Caco-2 (cell line): ENCODE measurements at regions of chr2 and their contacts with region 1.

Region 1: DNA sequence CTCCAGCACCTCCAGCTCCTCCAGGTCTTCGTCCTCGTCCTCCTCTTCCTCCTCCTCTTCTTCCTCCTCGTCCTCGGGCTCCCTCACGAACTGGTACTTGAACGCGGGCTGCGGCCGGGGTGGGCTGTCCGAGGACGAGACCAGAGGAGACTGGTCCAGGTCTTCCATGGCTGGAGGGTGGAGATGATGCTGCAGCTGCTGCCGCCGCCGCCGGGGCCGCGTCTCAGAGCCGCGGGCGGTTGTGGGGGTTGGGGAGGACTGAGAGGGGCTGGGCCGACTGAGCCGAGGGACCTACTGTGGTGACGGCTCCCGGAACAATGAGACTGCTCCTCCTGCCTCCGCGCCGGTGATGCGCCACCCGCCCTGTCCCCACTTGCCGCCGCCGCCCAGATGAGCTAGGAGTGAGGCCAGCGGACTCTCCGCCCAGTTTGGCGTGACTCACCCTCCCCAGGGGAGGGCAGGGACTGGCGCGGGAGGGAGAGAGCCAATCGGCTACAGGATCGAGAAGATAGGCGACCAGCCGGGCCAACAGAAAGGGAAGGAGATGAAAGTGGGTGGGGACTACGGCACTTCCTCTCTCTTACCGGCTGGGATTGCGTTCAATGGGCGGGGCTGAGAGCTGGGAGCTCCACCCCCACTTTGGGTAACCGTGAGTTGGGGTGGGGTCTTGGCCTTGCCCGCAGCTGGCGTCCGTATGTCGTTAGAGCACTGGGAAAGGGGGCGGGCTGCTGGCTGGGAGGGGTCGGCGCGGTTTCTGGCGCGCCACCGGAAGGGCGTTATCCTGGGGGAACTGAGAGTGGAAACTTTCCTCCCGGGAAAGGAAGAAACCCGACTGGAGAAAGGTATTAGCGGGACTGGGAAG is at the start of gene RTN4:
- DNase-seq: peak; percentile 99 to 100
- H3K4me3 ChIP-seq: peak within 1 kb of the TSS; percentile 87
- H3K4me3 Mint-ChIP-seq: peak within 1 kb of the TSS; percentile 88
- H3K27ac Mint-ChIP-seq: peak within 1 kb of the TSS; percentile 89
- H3K4me1 ChIP-seq: peaks cover 42% of the 10 kb centered on the region
- H3K4me1 Mint-ChIP-seq: peaks cover 21% of the 10 kb centered on the region
- H3K27me3 ChIP-seq: no peaks in the 10 kb centered on the region
- H3K27me3 Mint-ChIP-seq: no peaks in the 10 kb centered on the region
- CTCF ChIP-seq: no peak
- total RNA-seq, gene RTN4: 231 and 236 TPM in 2 replicates

Region 2: GRCh38 chr2:54899576-54900200 is 150.7 kb before region 1 on chr2:
- CTCF ChIA-PET with region 1: interaction called, 16 read pairs
- POLR2A ChIA-PET with region 1: no interaction called
- intact Hi-C with region 1: no loop called
- DNase-seq: peak in 1 of 2 experiments; percentile 50
- H3K4me3 ChIP-seq: no peak overlapping the region
- H3K4me3 Mint-ChIP-seq: no peak overlapping the region
- H3K27ac Mint-ChIP-seq: no peak overlapping the region
- H3K4me1 ChIP-seq: peaks cover 47% of the 10 kb centered on the region
- H3K4me1 Mint-ChIP-seq: peaks cover 22% of the 10 kb centered on the region
- H3K27me3 ChIP-seq: no peaks in the 10 kb centered on the region
- H3K27me3 Mint-ChIP-seq: no peaks in the 10 kb centered on the region
- CTCF ChIP-seq: peak; percentile 65 to 69

Region 3: DNA sequence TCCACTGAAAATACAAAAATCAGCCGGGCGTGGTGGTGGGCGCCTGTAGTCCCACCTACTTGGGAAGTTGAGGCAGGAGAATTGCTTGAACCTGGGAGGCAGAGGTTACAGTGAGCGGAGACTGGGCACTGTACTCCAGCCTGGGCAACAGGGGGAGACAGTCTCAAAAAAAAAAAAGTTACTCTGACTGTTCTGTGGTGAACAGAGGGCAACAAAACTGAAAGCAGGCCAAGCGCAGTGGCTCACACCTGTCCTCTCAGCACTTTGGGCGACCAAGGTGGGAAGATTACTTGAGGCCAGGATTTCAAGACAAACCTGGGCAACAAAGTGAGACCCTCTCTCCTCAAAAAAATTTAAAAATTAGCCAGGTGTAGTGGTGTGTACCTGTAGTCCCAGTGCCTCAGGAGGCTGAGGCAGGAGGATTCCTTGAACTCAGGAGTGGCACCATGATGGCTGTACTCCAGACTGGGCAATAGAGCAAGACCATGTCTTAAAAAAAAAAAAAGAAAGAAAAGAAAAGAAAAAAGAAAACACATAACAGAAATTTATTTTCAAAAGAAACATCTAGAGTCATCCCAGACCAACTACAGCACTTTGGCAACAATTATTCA is 13.5 kb after region 1 on chr2:
- CTCF ChIA-PET with region 1: interaction called, 3 read pairs
- POLR2A ChIA-PET with region 1: no interaction called
- intact Hi-C with region 1: loop called (anchors 1 kb)
- DNase-seq: peak in 1 of 2 experiments; percentile 17
- H3K4me3 ChIP-seq: no peak overlapping the region
- H3K4me3 Mint-ChIP-seq: no peak overlapping the region
- H3K27ac Mint-ChIP-seq: no peak overlapping the region
- H3K4me1 ChIP-seq: no peaks in the 10 kb centered on the region
- H3K4me1 Mint-ChIP-seq: no peaks in the 10 kb centered on the region
- H3K27me3 ChIP-seq: no peaks in the 10 kb centered on the region
- H3K27me3 Mint-ChIP-seq: no peaks in the 10 kb centered on the region
- CTCF ChIP-seq: peak in 1 of 2 experiments; percentile 14

Region 4: GRCh38 chr2:55115761-55116597 is 65.6 kb after region 1 on chr2:
- CTCF ChIA-PET with region 1: no interaction called
- POLR2A ChIA-PET with region 1: interaction called, 11 read pairs
- intact Hi-C with region 1: no loop called
- DNase-seq: no peak
- H3K4me3 ChIP-seq: no peak overlapping the region
- H3K4me3 Mint-ChIP-seq: no peak overlapping the region
- H3K27ac Mint-ChIP-seq: no peak overlapping the region
- H3K4me1 ChIP-seq: peaks cover 35% of the 10 kb centered on the region
- H3K4me1 Mint-ChIP-seq: peaks cover 28% of the 10 kb centered on the region
- H3K27me3 ChIP-seq: no peaks in the 10 kb centered on the region
- H3K27me3 Mint-ChIP-seq: no peaks in the 10 kb centered on the region
- CTCF ChIP-seq: no peak

Region 5: DNA sequence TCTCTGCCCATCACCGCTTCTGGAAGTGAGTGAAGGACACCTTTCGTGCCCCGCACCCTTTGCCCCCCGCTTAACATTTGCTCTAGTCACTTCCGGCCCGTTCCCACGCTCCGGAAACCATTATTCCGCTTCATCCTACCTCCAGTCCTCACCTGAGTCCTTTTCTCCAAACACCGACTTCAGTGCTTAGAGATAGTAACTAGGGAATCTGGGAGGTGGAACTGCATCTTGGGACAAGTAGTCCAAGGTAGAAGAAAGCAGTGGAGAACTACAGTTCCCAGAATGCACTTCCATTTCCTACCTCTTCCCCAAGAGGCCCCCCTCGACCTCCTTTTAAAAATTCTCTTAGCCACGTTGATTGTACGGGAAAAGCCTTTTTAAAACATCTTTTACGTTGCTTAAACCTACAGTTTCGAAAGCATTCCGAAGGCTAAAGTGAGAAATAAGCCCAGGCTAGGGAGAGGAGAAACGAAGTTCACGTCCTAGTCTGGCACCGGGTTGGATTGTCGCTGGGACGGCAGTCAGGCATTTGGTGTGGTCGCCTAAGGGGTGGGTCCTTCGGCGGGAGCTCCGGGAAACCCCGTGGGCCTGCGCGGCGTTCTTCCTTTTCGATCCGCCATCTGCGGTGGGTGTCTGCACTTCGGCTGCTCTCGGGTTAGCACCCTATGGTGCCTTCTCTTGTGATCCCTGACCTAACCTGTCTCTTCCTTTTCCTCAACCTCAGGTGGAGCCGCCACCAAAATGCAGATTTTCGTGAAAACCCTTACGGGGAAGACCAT is 181.9 kb after region 1 on chr2 and contains the starts of genes CLHC1 and RPS27A:
- CTCF ChIA-PET with region 1: no interaction called
- POLR2A ChIA-PET with region 1: interaction called, 9 read pairs
- intact Hi-C with region 1: loop called (anchors 2 kb)
- DNase-seq: peak; percentile 93 to 97
- H3K4me3 ChIP-seq: peak within 1 kb of the TSS; percentile 96
- H3K4me3 Mint-ChIP-seq: peak within 1 kb of the TSS; percentile 85
- H3K27ac Mint-ChIP-seq: peak within 1 kb of the TSS; percentile 94
- H3K4me1 ChIP-seq: peaks cover 38% of the 10 kb centered on the region
- H3K4me1 Mint-ChIP-seq: peaks cover 36% of the 10 kb centered on the region
- H3K27me3 ChIP-seq: no peaks in the 10 kb centered on the region
- H3K27me3 Mint-ChIP-seq: no peaks in the 10 kb centered on the region
- CTCF ChIP-seq: no peak
- total RNA-seq, gene CLHC1: 12.6 and 13.4 TPM in 2 replicates
- total RNA-seq, gene RPS27A: 1,305 and 1,418 TPM in 2 replicates